PC-3 (cell line): ENCODE measurements at regions of chr1 and their contacts with region 1.

Region 1: DNA sequence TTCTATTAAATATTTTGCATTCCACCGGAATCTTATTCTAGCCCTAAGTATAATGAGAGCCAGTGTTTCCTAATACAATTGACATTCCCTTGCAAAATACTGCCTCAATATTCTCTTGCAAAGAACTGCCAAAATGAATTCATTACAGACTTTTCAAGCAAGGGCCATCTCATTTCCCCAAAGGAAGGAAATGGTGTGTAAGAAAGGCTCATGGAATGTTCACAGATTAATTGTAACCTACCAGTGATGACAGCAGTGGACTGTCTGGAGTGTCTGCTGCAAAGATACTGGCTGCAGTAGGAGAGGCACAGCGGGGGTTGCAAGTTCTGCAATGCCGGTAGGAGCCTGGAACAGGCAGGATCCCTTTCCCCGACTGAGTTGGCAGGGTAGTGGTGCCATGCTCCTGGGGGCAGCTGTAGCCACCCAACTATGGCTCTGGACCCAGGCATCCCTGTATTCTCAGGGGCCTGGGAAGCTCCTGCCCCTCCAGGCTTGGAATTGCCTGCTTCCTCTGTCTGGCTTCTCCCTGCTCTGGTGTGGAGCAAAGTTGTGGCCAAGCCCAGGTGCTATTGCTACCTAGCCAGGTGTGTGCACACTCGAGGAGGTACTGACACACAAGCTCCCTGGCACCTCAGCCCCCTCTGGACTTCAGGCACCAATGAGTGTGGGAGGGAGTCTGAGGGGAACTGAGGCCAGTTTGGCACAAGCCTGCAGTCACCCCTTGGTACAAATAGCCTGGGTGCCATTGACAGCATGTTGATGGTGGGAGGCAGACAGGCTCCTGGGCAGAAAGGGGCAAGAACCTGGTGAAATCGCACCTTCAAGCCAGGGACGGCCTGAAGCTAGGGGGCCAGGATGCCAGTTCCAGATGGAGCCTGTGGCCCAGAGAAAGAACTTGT is 1371.0 kb downstream of the KCNT2 start:
- DNase-seq: no peak
- ATAC-seq: no peak
- H3K4me3 ChIP-seq: no peak overlapping the region
- H3K27ac ChIP-seq: no peak overlapping the region
- H3K4me1 ChIP-seq: no peaks in the 10 kb centered on the region
- H3K27me3 ChIP-seq: no peaks in the 10 kb centered on the region
- CTCF ChIP-seq: no peak

Region 2: GRCh38 chr1:195335541-195336120 is 98.4 kb after region 1 on chr1:
- CTCF ChIA-PET with region 1: no interaction called
- POLR2A ChIA-PET with region 1: no interaction called
- intact Hi-C with region 1: loop called (anchors 1 kb)
- DNase-seq: no peak
- ATAC-seq: no peak
- H3K4me3 ChIP-seq: no peak overlapping the region
- H3K27ac ChIP-seq: no peak overlapping the region
- H3K4me1 ChIP-seq: no peaks in the 10 kb centered on the region
- H3K27me3 ChIP-seq: no peaks in the 10 kb centered on the region
- CTCF ChIP-seq: no peak